HCT116 (cell line): ENCODE measurements at regions of chr6 and their contacts with region 1.

Region 1: DNA sequence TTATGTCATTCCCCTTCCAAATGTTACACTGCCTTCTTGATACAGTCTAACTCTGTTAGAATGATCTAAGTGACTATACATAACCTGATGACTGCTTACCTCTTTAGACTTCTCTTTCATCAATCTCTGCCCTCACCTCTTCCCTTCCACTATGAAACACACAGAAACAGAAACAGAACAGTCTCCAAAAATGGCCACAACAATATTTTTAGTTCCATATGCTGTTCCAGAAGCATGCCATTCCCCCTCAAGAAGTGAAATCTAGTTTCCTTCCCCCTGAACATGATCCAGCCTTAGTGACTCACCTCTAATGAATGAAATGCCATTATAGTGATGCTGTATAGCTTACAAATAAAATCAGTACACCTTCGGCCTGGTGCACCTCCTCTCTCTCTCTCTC is 229.3 kb upstream of the TENT5A start:
- DNase-seq: peak; percentile 43
- ATAC-seq: peak; percentile 87
- H3K4me3 ChIP-seq: peak overlapping the region in 1 of 2 experiments; percentile 15; a peak in 2 of 4 replicates
- H3K27ac ChIP-seq: no peak overlapping the region
- H3K4me1 ChIP-seq: peaks cover 0 to 15% of the 10 kb centered on the region in 2 experiments; a peak in 2 of 4 replicates
- H3K27me3 ChIP-seq: no peaks in the 10 kb centered on the region
- CTCF ChIP-seq: no peak
- POLR2A ChIP-seq: no peak
- RAD21 ChIP-seq: no peak; the same call in 1 of the 2 replicates

Region 2: DNA sequence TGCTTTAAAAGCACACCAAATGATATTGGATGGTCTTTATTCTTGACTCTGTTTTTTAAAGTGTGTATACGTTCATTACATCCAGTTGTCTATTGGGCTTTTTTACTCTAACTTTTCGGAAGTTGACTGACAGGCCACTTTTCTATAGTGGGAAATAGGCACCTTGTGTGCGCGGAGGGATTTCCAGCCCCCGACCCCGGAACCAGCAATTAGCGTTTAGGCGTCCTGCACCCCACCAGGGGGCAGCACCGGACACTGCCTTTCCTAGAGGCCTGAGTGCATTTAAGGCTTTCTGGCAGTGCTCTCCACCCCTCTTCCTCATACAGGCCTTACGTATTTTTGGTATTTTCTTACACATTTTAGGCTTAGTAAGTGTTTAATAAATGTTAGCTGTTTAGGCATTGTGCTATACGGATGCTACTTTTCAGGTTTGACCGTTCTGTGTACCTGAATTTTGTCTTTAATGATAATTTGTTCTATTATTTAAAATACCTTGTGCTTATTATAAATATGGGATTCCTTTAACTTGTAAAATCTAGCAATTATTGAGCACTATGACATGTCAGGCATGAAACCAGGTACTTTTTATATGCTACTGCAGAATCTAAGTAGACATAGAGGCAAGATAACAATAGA is 1643.5 kb before region 1 on chr6:
- CTCF ChIA-PET with region 1: no interaction called
- POLR2A ChIA-PET with region 1: no interaction called
- RAD21 ChIA-PET with region 1: no interaction called
- intact Hi-C with region 1: loop called (anchors 2 kb)
- DNase-seq: peak; percentile 34
- ATAC-seq: peak; percentile 90
- H3K4me3 ChIP-seq: no peak overlapping the region
- H3K27ac ChIP-seq: no peak overlapping the region
- H3K4me1 ChIP-seq: no peaks in the 10 kb centered on the region
- H3K27me3 ChIP-seq: no peaks in the 10 kb centered on the region
- CTCF ChIP-seq: peak; percentile 43 to 89 (median 87); a peak in 5 of 6 replicates
- POLR2A ChIP-seq: no peak
- RAD21 ChIP-seq: peak; percentile 66

Region 3: DNA sequence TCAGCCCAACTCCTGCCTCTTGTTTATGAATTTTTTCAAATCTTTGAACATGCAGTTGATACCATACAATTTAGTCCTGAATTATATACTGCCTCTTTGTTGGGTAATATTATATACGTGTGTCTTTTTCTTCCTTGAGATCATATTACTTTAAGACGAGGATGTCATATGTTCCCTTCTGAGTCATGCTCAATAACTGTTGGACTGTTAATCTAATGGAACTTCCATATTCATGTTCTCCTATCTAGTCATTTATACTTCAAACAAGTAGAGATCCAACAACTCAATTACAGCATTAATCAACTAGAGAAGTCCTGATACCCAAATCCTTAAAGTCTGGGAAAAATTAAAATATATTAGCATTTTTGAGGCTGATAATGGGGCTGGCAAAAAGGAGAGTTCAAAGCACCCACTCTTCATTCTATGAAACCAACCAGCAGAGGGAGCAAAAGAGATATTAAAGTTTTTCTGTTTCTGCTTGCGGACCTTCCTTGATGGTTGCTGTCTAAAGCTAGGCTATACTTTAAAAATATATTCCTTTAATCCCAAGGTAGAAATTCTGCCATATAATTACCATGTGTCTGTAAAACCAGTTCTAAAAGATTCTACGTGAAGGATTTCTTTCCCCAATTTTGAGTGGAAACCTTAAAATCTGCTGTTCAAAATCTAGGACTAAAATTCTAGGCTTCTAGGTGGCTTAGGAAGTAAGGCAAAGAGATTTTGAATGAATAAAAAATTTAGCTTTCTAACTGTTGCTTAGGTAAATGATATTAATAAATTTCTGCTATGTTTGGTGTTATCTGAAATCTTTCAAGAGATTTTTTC is 1376.4 kb before region 1 on chr6:
- CTCF ChIA-PET with region 1: no interaction called
- POLR2A ChIA-PET with region 1: no interaction called
- RAD21 ChIA-PET with region 1: no interaction called
- intact Hi-C with region 1: loop called (anchors 1 kb)
- DNase-seq: peak; percentile 42
- ATAC-seq: peak; percentile 89
- H3K4me3 ChIP-seq: no peak overlapping the region
- H3K27ac ChIP-seq: no peak overlapping the region
- H3K4me1 ChIP-seq: peaks cover 0 to 20% of the 10 kb centered on the region in 2 experiments; a peak in 2 of 4 replicates
- H3K27me3 ChIP-seq: no peaks in the 10 kb centered on the region
- CTCF ChIP-seq: peak; percentile 55 to 74 (median 55); a peak in 5 of 6 replicates
- POLR2A ChIP-seq: no peak
- RAD21 ChIP-seq: peak; percentile 79

Region 4: DNA sequence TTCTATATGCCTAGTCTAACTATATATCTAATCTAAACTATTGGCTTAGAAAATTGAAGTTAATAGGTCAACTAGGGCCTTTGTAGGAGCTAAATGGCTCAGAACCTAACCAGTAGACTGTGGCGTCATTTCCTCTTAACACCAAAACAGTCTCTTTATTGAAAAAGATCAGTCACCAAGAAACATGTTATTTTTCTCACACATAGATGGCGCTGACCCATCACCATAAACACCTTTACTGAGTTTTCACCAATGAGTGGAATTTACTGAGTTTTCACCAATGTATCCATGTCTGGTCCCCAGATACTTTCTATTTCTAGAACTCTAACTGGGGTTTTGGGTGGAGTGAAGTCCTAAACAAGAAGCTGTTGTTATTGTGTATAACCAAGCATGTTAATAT is 1239.3 kb before region 1 on chr6:
- CTCF ChIA-PET with region 1: no interaction called
- POLR2A ChIA-PET with region 1: no interaction called
- RAD21 ChIA-PET with region 1: no interaction called
- intact Hi-C with region 1: loop called (anchors 10 kb)
- DNase-seq: peak; percentile 35
- ATAC-seq: peak; percentile 71
- H3K4me3 ChIP-seq: no peak overlapping the region
- H3K27ac ChIP-seq: no peak overlapping the region
- H3K4me1 ChIP-seq: no peaks in the 10 kb centered on the region
- H3K27me3 ChIP-seq: no peaks in the 10 kb centered on the region
- CTCF ChIP-seq: peak; percentile 30 to 63 (median 46); a peak in 5 of 6 replicates
- POLR2A ChIP-seq: no peak
- RAD21 ChIP-seq: peak; percentile 74

Region 5: GRCh38 chr6:81241126-81242041 is 740.4 kb before region 1 on chr6:
- CTCF ChIA-PET with region 1: no interaction called
- POLR2A ChIA-PET with region 1: no interaction called
- RAD21 ChIA-PET with region 1: no interaction called
- intact Hi-C with region 1: loop called (anchors 10 kb)
- DNase-seq: peak; percentile 27
- ATAC-seq: no peak
- H3K4me3 ChIP-seq: no peak overlapping the region
- H3K27ac ChIP-seq: no peak overlapping the region
- H3K4me1 ChIP-seq: no peaks in the 10 kb centered on the region
- H3K27me3 ChIP-seq: no peaks in the 10 kb centered on the region
- CTCF ChIP-seq: peak; percentile 37 to 56 (median 54); a peak in 5 of 6 replicates
- POLR2A ChIP-seq: no peak
- RAD21 ChIP-seq: peak; percentile 66